Dorsolateral prefrontal cortex (tissue), 120 donors: ENCODE measurements at regions of chr19 and their contacts with region 1.

Region 1: GRCh38 chr19:2962045-2962561 is 15.3 kb upstream of the TLE6 start:
- DNase-seq: peak in 2 of 10 donors; percentile 29 to 56
- H3K4me3 ChIP-seq: peak overlapping the region in 20 of 59 donors; percentile 0 to 52 (median 23)
- H3K27ac ChIP-seq: no peak overlapping the region
- H3K27me3 ChIP-seq: no peaks in the 10 kb centered on the region
- CTCF ChIP-seq: peak; percentile 61 to 89 (median 79)

Region 2: DNA sequence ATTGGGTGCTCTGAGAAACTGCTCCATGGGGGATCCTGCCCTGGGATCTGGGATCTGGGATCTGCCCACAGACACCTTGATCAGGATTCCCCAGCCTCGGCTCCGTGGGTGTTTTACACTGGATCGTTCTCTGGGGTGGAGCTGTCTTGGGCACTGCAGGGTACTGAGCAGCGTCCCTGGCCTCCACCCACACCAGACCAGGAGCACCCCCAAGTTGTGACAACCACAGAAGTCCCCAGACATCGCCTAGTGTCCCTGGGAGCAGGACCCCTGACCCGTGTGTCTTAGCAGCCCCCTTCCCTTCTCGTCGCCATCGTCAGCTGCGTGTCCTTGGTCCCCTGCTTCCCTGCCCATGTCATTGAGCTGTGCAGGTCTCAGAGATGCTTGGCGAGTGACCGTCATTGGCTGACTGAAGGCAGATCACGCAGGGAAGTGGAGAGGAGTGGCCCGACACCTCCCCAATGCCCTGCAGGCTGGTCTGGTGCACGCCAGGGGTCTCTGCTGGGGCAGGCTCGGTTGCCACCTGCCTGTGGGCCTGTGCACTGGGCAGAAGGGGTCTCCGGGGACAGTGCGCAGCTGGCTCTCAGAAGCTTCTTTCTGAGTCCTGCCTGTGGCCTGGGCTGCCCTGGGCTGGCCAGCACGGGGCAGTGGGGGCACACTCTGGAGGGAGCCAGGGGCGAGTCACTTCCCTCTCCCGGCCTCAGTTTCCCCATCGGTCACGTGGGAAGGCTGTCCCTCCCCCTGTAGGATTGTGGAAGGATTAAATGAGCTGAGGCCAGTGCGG is 138.2 kb after region 1 on chr19:
- intact Hi-C with region 1: loop called (anchors 5 to 10 kb)
- DNase-seq: peak in 1 of 10 donors; percentile 47
- H3K4me3 ChIP-seq: peak overlapping the region in 1 of 59 donors; percentile 84
- H3K27ac ChIP-seq: peak overlapping the region in 4 of 59 donors; percentile 10 to 87 (median 28)
- H3K27me3 ChIP-seq: no peaks in the 10 kb centered on the region
- CTCF ChIP-seq: no peak

Region 3: GRCh38 chr19:3108775-3109174 is 146.7 kb after region 1 on chr19:
- intact Hi-C with region 1: loop called (anchors 5 to 10 kb)
- DNase-seq: peak in 4 of 10 donors; percentile 27 to 65 (median 54)
- H3K4me3 ChIP-seq: no peak overlapping the region
- H3K27ac ChIP-seq: peak overlapping the region in 1 of 59 donors; percentile 21
- H3K27me3 ChIP-seq: no peaks in the 10 kb centered on the region
- CTCF ChIP-seq: peak; percentile 39 to 83 (median 68)